ENCODE measurements at regions of chr16 and their contacts with region 1.

Region 1: DNA sequence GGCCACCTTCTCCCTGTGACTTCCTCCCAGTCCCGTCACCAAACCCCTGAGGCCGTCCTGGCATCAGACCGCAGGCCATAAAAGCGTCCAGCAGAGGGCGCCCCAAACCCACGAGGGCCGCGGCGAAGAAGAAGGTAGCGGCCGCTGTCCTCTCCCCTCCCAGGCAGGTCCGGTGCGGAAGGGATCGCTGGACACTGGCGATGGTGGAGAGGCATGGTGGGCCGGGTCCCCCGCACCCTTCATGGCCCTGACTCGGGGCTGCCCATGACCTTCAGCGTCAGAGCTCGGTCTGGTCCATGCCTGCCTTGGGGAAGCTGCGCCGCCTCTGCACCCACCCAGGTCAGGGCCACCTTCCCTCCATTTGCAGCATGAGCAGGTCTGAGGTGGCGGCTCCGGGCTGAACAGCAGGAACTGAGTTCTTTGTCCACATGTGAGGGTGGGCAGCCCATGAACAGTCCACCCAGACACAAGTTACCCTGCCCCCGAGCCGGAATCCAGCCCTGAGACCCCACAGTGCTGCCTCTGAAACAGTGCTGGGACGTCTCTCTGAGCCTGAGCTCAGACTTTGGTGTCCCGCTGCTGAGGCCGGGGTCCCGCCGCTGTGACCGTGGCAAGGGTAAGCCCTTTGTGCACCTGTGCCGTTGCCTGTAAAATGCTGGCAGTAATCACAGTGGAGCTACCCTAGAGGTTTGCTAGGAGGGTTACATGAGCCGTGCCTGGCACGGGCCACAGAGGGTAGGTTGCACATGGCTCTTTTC is 40.8 kb upstream of the CMIP start:
- H3K4me3 Mint-ChIP-seq: peak overlapping the region; percentile 32
- H3K27ac Mint-ChIP-seq: no peak overlapping the region
- H3K4me1 Mint-ChIP-seq: peaks cover 7% of the 10 kb centered on the region
- H3K27me3 Mint-ChIP-seq: peaks cover 25% of the 10 kb centered on the region

Region 2: DNA sequence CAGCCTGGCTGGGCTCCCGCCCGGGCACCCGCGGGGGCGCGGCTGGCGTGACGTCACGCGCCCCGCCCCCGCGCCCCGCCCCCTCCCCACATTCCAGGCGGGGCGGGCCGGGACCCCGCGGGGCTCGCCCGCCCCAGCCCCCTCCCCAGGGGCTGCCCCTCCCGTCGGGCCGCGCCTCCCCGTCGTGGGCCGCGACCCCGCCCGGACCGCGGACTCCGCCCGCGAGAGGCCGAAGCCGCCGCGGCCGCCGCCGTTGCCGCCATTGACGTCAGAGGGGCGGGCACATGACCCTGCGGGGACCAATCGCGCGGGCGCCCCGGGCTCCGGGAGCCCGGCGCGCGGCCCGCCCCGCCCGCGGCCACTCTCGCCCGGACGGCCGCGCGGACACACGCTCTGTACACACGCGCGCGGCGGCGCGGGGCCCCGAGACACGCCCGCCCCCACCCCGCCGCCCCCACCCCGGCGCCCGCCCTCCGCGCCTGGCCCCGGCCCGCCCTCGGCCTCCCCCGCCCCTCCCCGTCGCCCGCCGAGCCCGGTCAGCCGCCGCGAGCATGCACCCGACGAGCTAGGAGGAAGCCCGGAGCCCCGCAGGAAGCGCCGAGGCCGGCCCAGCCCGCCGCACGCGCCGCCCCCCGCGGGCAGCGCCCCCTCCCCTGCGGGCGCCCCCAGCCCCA is 40.8 kb after region 1 on chr16 and contains the start of gene CMIP:
- intact Hi-C with region 1: no loop called
- H3K4me3 Mint-ChIP-seq: peak within 1 kb of the TSS; percentile 100
- H3K27ac Mint-ChIP-seq: peak within 1 kb of the TSS; percentile 90
- H3K4me1 Mint-ChIP-seq: peaks cover 57% of the 10 kb centered on the region
- H3K27me3 Mint-ChIP-seq: peaks cover 22% of the 10 kb centered on the region

Region 3: GRCh38 chr16:81623363-81624102 is 219.7 kb after region 1 on chr16:
- intact Hi-C with region 1: loop called (anchors 10 kb)
- H3K4me3 Mint-ChIP-seq: no peak overlapping the region
- H3K27ac Mint-ChIP-seq: no peak overlapping the region
- H3K4me1 Mint-ChIP-seq: peaks cover 20% of the 10 kb centered on the region
- H3K27me3 Mint-ChIP-seq: no peaks in the 10 kb centered on the region

Region 4: DNA sequence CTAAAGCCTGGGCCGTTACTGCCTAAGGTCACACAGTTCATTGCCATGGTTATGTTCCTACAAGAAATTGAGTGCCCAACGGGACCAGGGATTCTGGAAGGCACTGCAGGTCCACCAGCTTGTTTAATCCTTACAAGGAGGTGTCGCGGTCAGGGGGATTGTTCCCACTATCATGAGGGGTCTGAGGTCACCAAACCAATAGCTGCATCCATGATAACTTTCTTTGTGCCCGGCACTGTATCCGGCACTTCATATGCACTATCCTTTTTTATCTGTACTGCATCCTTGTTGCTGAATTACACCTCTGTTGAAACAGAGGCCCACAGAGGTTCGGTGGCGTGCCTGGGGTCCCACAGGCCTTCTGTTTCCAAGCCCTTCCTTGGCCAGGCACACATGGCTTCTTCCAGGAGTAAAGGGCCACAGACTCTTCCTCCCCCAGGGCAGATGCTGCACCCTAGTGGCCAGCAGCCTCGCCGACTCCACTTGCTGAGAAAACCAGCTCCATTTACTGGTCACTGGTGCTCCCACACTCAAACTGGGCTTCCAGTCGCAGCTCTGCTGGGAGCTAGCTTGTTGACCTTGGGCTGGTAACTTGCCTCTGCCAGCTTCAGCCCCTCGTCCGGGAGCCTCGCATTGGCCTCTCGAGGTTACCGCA is 293.3 kb after region 1 on chr16:
- intact Hi-C with region 1: loop called (anchors 5 kb)
- H3K4me3 Mint-ChIP-seq: no peak overlapping the region
- H3K27ac Mint-ChIP-seq: no peak overlapping the region
- H3K4me1 Mint-ChIP-seq: no peaks in the 10 kb centered on the region
- H3K27me3 Mint-ChIP-seq: no peaks in the 10 kb centered on the region

Region 5: GRCh38 chr16:81723098-81723723 is 319.4 kb after region 1 on chr16:
- intact Hi-C with region 1: loop called (anchors 1 kb)
- H3K4me3 Mint-ChIP-seq: no peak overlapping the region
- H3K27ac Mint-ChIP-seq: no peak overlapping the region
- H3K4me1 Mint-ChIP-seq: peaks cover 20% of the 10 kb centered on the region
- H3K27me3 Mint-ChIP-seq: peaks cover 4% of the 10 kb centered on the region

Measured in dendritic cell treated with granulocyte-macrophage colony-stimulating factor and Interleukin-4, amounts not matched to agents 40 ng/mL and 50 ng/mL, for 4 days (primary cell).